Naive thymus-derived CD8-positive, alpha-beta T cell (primary cell): ENCODE measurements at regions of chr16 and their contacts with region 1.

Region 1: DNA sequence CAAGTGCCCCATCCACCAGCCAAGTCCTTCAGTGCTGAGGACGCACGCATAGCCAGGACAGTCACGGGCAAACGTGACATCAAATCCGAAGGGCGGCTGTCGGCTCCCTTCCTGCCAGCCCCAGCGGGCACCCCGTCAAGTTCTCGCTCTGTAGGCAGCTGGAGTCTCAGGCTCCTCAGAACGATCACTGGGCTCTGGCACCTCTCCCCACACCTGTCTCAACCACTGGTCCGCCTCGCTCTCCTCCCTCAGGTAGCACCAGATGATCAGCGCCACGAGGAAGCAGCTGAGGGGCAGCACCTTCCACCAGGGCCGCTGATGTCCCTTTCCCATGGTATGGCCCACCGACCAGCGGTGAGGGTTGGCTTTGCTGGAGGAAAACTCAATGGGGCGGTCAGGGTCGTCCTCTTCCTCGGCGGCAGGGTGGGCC is 421 bp downstream of the UQCC4 start:
- DNase-seq: no peak
- ATAC-seq: no peak
- H3K4me3 Mint-ChIP-seq: peak overlapping the region; percentile 70 to 95 (median 92)
- H3K27ac Mint-ChIP-seq: peak overlapping the region in 9 of 10 donors; percentile 84 to 98 (median 95)
- H3K4me1 Mint-ChIP-seq: peaks cover 1 to 33% (median 22%) of the 10 kb centered on the region in 4 donors
- H3K27me3 Mint-ChIP-seq: no peaks in the 10 kb centered on the region

Region 2: GRCh38 chr16:1308977-1309885 is 110.9 kb before region 1 on chr16 and contains the start of gene UBE2I:
- POLR2A ChIA-PET with region 1: interaction called, 12 read pairs
- DNase-seq: peak; percentile 90 to 100 (median 98)
- ATAC-seq: peak; percentile 67 to 68
- H3K4me3 Mint-ChIP-seq: peak within 1 kb of the TSS; percentile 94 to 99 (median 98)
- H3K27ac Mint-ChIP-seq: peak within 1 kb of the TSS; percentile 98 to 100 (median 100)
- H3K4me1 Mint-ChIP-seq: peaks cover 23 to 70% (median 59%) of the 10 kb centered on the region in 4 donors
- H3K27me3 Mint-ChIP-seq: no peaks in the 10 kb centered on the region
- polyA plus RNA-seq, gene UBE2I: 87.5 to 89.6 (median 89.0) TPM

Region 3: GRCh38 chr16:1408171-1408837 is 11.8 kb before region 1 on chr16:
- POLR2A ChIA-PET with region 1: interaction called, 19 read pairs
- DNase-seq: peak; percentile 92 to 98 (median 96)
- ATAC-seq: peak; percentile 93 to 94
- H3K4me3 Mint-ChIP-seq: peak overlapping the region; percentile 65 to 86 (median 80)
- H3K27ac Mint-ChIP-seq: peak overlapping the region in 7 of 10 donors; percentile 31 to 92 (median 67)
- H3K4me1 Mint-ChIP-seq: peaks cover 7 to 58% (median 32%) of the 10 kb centered on the region in 4 donors
- H3K27me3 Mint-ChIP-seq: no peaks in the 10 kb centered on the region

Region 4: DNA sequence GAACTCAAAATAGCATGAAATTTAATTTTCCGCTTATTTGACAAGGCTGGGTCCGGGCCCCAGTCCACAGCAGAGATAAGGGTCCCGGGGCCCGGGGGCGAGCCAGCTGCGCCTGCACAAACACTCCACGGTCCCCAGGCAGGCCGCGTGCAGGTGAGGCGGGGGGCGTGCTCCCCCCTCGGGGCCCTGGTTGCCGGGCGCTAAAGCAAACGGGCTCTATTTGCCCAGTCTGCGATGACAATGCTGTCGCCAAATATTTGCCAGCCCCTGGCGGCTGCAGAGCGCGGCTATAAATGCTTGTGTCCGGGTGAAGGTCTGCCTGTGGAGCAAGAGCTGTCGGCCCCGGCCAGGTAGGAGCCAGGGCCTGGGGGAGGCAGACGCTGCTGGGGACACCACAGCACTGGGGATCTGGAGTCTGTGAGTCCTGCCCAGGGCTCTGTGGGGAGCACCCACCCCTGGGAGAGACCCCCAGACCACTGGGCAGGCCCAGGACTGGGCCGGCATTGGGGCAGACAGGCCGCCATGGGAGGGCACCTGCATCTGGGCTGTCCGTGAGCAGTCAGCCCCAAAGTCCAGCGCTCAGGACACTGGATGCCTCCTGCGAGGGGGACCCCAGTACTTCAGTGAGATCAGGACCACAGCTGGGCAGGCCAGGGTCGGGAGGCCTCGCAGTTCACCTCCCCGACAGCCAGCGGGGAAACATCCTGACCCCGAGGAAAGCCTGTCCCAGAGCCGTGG is 10.8 kb after region 1 on chr16 and contains the start of gene PERCC1:
- POLR2A ChIA-PET with region 1: interaction called, 64 read pairs
- DNase-seq: no peak
- ATAC-seq: no peak
- H3K4me3 Mint-ChIP-seq: peak within 1 kb of the TSS; percentile 54 to 86 (median 74)
- H3K27ac Mint-ChIP-seq: peak within 1 kb of the TSS; percentile 51 to 93 (median 83)
- H3K4me1 Mint-ChIP-seq: peaks cover 0 to 7% (median 4%) of the 10 kb centered on the region in 4 donors
- H3K27me3 Mint-ChIP-seq: no peaks in the 10 kb centered on the region
- polyA plus RNA-seq, gene PERCC1: 0.19 TPM in 1 of 3 donors, not detected in the others

Region 5: DNA sequence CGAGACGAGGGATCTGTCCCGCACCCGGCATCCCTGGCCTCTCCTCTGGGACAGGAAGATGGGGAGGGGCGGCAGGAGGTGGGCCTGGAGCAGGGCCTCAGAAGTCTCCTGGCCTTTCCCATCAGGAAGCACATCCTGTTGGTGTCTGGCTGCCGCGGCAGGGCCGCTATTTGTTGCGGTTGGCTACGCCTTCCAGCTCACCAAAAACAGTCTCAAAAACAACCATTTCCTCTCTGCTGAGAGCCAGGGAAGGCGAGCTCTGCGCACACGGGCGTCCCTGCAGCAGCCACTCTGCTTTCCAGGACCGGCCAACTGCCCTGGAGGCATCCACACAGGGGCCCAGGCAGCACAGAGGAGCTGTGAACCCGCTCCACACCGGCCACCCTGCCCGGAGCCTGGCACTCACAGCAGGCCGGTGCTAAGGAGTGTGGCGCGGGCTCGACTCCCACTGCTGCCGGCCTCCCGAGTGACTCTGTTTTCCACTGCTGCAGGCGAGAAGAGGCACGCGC is 113.4 kb after region 1 on chr16 and contains the start of gene TMEM204:
- POLR2A ChIA-PET with region 1: interaction called, 34 read pairs
- DNase-seq: peak in 8 of 10 donors; percentile 15 to 73 (median 50)
- ATAC-seq: peak; percentile 57 to 59
- H3K4me3 Mint-ChIP-seq: peak within 1 kb of the TSS; percentile 96 to 99 (median 98)
- H3K27ac Mint-ChIP-seq: peak within 1 kb of the TSS; percentile 90 to 97 (median 94)
- H3K4me1 Mint-ChIP-seq: peaks cover 25 to 54% (median 48%) of the 10 kb centered on the region in 4 donors
- H3K27me3 Mint-ChIP-seq: no peaks in the 10 kb centered on the region
- polyA plus RNA-seq, gene TMEM204: 95.9 to 135 (median 125) TPM

Region 6: DNA sequence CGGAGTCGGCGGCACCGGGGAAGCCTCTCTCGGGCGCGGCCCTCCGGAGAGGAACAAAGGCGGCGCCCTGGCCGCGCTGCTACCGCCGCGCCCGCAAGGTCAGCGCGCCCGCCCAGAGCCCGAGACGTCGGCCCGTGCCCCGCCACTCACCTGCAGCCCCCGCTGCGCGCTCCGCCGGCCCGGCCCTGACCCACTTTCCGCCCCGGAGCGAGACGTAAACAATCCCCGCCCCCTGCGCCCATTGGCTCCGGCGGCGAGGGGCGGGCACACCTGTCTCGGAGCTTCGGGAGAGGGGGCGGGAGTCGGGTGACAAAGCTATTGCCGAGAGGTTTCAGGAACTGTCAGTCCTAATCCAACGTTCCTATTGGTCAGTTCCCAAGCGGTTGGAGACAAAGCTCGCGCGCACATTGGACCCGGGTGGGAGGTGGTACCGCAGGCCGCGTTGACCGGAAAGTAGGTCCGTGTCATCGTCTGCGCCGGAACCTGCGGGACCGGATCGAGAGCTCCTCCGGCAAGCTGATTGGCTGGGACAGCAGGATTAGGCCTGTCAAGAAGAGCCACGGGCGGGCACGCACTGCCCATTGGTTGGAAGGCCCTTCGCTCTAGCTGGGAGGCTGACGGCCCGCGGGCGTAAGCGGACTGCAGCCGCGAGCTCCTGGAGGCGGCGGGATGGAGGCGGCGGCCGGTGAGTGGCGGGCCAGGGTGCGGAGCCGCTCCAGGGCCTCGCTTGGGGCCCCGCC is 362.4 kb after region 1 on chr16 and contains the starts of genes NUBP2 and SPSB3:
- POLR2A ChIA-PET with region 1: interaction called, 17 read pairs
- DNase-seq: peak; percentile 90 to 99 (median 97)
- ATAC-seq: peak; percentile 86 to 87
- H3K4me3 Mint-ChIP-seq: peak within 1 kb of the TSS; percentile 83 to 97 (median 93)
- H3K27ac Mint-ChIP-seq: peak within 1 kb of the TSS; percentile 82 to 99 (median 93)
- H3K4me1 Mint-ChIP-seq: peaks cover 8 to 52% (median 27%) of the 10 kb centered on the region in 4 donors
- H3K27me3 Mint-ChIP-seq: no peaks in the 10 kb centered on the region
- polyA plus RNA-seq, gene NUBP2: 87.2 to 90.6 (median 87.3) TPM
- polyA plus RNA-seq, gene SPSB3: 38.0 to 42.0 (median 40.8) TPM